Left ventricle myocardium inferior (tissue), 1 donor: ENCODE measurements at regions of chr2 and their contacts with region 1.

Region 1: DNA sequence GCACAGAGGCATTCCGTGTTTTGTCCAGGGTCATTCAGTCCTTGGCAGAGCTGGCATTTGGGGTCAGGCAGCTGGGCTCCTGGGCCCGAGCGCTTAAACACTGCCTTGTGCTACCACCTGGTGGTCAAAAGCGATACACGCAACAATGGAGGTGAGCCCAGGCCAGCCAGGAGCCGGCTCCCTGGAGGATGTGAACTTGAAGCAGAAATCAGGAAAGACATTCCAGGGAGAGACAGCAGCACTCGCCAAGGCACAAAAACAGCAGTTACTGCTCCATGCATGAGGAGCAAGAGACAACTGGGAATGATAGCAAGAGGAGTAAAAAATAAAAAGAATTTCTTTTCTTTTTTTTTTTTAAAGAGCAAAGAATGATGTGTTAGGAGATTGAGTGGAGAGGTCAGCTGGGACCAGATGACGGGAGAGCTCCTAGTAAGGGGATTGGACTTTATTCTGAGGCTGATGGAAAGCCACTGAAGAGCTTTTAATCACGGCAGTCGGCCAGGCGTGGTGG is 20.7 kb downstream of the SCYGR8 start:
- DNase-seq: peak; percentile 75
- H3K4me3 ChIP-seq: no peak overlapping the region
- H3K27ac ChIP-seq: peak overlapping the region; percentile 51
- H3K4me1 ChIP-seq: peaks cover 11% of the 10 kb centered on the region
- H3K27me3 ChIP-seq: no peaks in the 10 kb centered on the region
- CTCF ChIP-seq: peak; percentile 90

Region 2: DNA sequence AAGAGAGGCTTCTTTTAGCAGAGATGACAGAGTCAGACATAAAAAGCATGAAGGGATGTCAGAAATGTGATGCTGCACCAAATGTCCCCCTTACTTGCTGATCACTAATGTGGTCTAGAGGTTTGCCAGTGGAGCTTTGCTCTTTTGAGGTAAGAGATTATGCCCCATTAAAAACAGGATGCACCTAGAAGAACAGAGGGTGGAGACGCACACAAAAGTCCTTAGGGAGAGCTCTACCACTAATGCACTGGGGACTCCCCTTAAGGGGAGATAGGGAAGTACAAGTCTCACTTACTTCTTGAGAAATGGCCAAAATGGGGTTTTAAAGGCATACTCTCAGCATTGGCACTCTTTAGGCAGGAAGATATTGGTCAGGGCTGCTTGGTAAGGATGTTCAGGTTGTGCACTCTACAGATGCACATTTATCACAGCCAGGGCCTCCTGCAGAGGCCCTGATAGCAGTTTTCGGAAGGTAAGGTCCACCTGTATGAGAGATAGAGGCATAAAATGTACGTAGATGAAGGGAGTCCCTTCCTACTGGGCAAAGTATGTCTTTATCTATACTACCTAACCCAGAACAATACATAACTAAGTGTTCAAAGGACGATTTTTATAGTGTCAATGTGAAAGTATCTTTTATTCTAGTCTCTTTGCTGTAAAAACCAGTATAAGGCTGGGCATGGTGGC is 361.7 kb before region 1 on chr2:
- intact Hi-C with region 1: loop called (anchors 5 kb)
- DNase-seq: no peak
- H3K4me3 ChIP-seq: no peak overlapping the region
- H3K27ac ChIP-seq: no peak overlapping the region
- H3K4me1 ChIP-seq: peaks cover 15% of the 10 kb centered on the region
- H3K27me3 ChIP-seq: peaks cover 5% of the 10 kb centered on the region
- CTCF ChIP-seq: no peak

Region 3: DNA sequence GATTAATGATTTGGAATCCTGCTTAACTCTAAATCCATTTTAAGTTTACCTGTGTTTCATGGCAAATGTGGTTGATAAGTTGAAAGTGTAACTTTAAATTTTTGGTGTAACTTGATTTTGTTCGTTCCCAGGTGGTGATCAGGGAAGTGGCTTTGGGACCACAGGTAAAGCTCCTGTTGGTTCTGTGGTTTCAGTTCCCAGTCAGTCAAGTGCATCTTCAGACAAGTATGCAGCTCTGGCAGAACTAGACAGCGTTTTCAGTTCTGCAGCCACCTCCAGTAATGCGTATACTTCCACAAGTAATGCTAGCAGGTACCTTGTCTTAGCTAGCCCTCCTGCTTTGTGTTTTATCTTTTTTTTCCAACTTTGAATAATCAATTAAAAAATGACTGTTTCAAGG is 231.7 kb before region 1 on chr2:
- intact Hi-C with region 1: no loop called
- DNase-seq: no peak
- H3K4me3 ChIP-seq: no peak overlapping the region
- H3K27ac ChIP-seq: no peak overlapping the region
- H3K4me1 ChIP-seq: no peaks in the 10 kb centered on the region
- H3K27me3 ChIP-seq: no peaks in the 10 kb centered on the region
- CTCF ChIP-seq: no peak

Region 4: GRCh38 chr2:227655454-227655853 is 111.0 kb before region 1 on chr2:
- intact Hi-C with region 1: loop called (anchors 5 kb)
- DNase-seq: no peak
- H3K4me3 ChIP-seq: no peak overlapping the region
- H3K27ac ChIP-seq: no peak overlapping the region
- H3K4me1 ChIP-seq: no peaks in the 10 kb centered on the region
- H3K27me3 ChIP-seq: peaks cover 8% of the 10 kb centered on the region
- CTCF ChIP-seq: no peak

Region 5: DNA sequence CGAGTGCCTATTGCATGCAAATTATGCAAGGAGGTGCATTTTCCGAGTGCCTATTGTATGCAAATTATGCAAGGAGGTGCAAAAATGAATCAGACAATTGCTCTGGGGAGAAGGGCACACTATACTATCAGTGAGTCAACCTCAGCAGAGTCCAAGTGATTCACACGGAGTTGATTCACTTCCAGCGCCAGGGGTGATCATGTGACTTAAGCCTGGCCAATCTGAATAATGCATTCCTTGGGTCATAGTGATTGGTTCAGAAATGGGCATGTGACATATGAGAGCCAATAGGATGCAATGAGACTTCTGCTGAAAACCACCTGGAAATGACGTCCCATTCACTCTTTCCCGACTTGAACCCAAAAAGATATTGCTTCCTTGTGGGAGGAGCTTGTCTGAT is 257.2 kb after region 1 on chr2:
- intact Hi-C with region 1: no loop called
- DNase-seq: no peak
- H3K4me3 ChIP-seq: no peak overlapping the region
- H3K27ac ChIP-seq: no peak overlapping the region
- H3K4me1 ChIP-seq: peaks cover under 1% of the 10 kb centered on the region
- H3K27me3 ChIP-seq: no peaks in the 10 kb centered on the region
- CTCF ChIP-seq: no peak